ENCODE measurements at regions of chr14 and their contacts with region 1.

Region 1: DNA sequence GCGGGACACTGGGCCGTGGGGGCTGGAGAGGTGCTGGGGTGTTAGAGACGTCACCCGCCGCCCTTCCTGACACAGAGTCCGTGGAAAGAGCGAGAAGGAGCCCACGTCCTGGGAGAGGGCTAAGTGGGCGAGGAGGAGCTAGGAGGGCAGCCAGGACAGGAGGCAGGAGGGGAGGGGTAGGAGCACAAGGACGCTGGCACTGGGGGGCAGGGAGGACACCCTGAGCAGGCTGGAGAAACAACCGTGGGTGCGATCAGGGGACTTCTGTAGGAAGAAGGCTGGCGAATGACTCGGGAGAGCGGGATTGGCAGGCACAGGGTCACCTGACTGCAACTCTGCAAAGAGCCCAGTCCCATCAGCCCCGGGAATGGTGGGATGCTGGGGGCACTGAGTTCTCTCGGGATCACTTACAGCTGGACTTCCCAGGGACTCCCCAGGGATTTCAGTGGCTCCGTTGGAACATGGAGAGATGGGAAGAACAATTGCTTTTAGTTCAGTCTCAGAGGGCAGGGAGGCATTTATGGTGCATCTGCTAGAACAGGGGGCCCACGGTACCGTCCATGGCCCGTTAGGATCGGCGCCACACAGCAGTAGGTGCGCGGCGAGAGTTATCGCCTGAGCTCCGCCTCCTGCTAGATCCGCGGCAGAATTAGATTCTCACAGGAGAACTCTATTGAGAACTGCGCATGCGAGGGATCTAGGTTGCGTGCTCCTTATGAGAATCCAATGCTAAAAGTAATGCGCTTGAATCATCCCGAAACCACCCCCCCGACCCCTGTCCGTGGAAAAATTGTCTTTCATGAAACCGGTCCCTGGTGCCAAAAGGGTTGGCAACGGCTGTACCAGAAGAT is 24.3 kb downstream of the UBR7 start:
- DNase-seq: no peak
- ATAC-seq: no peak; the same call in 2 of the 3 replicates
- H3K4me3 ChIP-seq: peak overlapping the region in 1 of 3 experiments; percentile 16; a peak in 1 of 6 replicates
- H3K27ac ChIP-seq: no peak overlapping the region
- H3K4me1 ChIP-seq: peaks cover 14% of the 10 kb centered on the region; the same call in 1 of the 2 replicates
- H3K27me3 ChIP-seq: no peaks in the 10 kb centered on the region
- CTCF ChIP-seq: no peak
- EP300 ChIP-seq: no peak
- POLR2A ChIP-seq: no peak
- RAD21 ChIP-seq: no peak

Region 2: GRCh38 chr14:93543766-93544165 is 312.4 kb after region 1 on chr14:
- CTCF ChIA-PET with region 1: interaction called, 4 read pairs
- POLR2A ChIA-PET with region 1: no interaction called
- in situ Hi-C with region 1: loop called (anchors 10 kb)
- intact Hi-C with region 1: no loop called
- DNase-seq: peak; percentile 10
- ATAC-seq: no peak
- H3K4me3 ChIP-seq: no peak overlapping the region
- H3K27ac ChIP-seq: no peak overlapping the region
- H3K4me1 ChIP-seq: no peaks in the 10 kb centered on the region
- H3K27me3 ChIP-seq: peaks cover 0 to 15% of the 10 kb centered on the region in 2 experiments; a peak in 2 of 5 replicates
- CTCF ChIP-seq: peak; percentile 22
- EP300 ChIP-seq: no peak
- POLR2A ChIP-seq: no peak
- RAD21 ChIP-seq: no peak

Measured in HepG2 (cell line).